MCF 10A (cell line): ENCODE measurements at regions of chr17 and their contacts with region 1.

Region 1: DNA sequence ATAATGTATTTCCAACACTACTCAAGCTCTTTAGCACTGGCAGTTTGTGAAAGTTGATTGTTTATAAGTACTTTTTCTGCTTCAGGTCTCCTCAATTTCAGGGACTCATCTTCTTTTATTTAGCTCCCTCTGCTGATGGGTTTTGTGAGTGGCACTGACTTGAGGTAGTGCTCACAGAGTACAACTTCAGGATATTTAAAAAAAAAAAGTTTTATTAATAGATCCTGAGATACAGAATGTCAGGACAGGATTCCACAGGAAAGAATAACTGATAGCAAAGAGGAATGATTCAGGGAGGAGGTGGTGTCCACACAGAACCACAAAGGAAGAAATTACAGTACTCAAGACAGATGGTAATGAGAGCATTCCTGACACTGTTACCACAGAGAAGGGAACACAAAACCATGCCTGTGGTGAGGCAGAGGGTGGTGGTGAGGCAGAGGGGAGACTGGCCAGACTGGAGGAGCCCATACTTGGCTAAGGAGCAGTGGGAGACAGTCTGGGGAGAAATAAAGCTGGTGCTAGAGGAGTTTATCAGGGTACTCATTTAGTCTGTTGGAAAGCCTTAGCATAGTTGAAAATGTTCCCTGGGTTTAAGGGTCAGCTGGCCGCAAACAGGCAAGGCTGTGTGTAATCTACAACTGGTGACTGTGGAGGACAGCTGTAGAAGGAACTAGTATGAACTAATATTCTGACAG is 63.7 kb downstream of the SPAG9 start:
- DNase-seq: peak; percentile 63
- H3K4me3 Mint-ChIP-seq: no peak overlapping the region
- H3K27ac Mint-ChIP-seq: peak overlapping the region; percentile 21
- H3K4me1 Mint-ChIP-seq: peaks cover 16% of the 10 kb centered on the region
- H3K27me3 Mint-ChIP-seq: no peaks in the 10 kb centered on the region
- CTCF ChIP-seq: no peak

Region 2: DNA sequence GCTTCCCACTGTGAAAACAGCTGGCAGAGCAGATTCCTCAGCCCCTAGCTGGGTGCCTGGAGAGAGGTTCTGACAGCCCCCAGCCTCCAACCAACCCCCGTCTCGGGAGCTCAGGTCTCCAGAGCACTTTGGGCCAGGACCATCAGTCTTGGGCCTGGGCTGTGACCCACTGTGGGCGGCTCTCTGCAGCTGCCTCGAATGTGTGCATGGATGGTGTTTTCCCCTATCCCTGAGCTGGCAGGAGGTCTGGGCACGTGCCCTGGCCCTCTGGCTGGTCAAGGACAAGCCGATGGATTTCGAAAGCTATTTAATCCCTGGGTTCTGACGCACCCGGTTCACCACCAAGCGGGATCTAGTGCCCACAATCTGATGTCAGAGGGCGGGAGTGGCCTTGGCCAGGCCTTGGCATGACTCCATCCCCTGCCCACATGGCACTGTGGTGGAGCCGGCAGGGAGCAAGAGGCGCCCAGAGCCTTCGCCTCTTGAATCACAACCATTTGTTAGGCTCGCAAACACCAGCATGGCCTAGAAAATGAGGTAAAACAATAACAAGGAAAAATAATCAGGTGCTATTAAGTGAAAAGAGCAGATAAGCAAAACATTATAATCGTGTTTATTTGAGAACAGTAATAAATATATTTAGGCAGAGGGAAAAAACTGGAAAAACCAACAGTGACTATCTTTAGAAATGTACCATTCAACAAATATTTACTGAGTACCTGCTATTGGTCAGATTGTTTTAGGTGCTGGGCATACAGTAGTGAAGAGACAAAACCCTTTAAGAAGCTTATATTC is 121.6 kb before region 1 on chr17:
- CTCF ChIA-PET with region 1: no interaction called
- POLR2A ChIA-PET with region 1: no interaction called
- intact Hi-C with region 1: no loop called
- DNase-seq: peak; percentile 99
- H3K4me3 Mint-ChIP-seq: peak overlapping the region; percentile 62
- H3K27ac Mint-ChIP-seq: peak overlapping the region; percentile 93
- H3K4me1 Mint-ChIP-seq: peaks cover 38% of the 10 kb centered on the region
- H3K27me3 Mint-ChIP-seq: no peaks in the 10 kb centered on the region
- CTCF ChIP-seq: no peak

Region 3: GRCh38 chr17:51000835-51001638 is 55.9 kb before region 1 on chr17:
- CTCF ChIA-PET with region 1: interaction called, 52 read pairs
- POLR2A ChIA-PET with region 1: interaction called, 5 read pairs
- intact Hi-C with region 1: loop called (anchors 1 kb)
- DNase-seq: peak; percentile 69
- H3K4me3 Mint-ChIP-seq: no peak overlapping the region
- H3K27ac Mint-ChIP-seq: no peak overlapping the region
- H3K4me1 Mint-ChIP-seq: no peaks in the 10 kb centered on the region
- H3K27me3 Mint-ChIP-seq: no peaks in the 10 kb centered on the region
- CTCF ChIP-seq: peak; percentile 55

Region 4: DNA sequence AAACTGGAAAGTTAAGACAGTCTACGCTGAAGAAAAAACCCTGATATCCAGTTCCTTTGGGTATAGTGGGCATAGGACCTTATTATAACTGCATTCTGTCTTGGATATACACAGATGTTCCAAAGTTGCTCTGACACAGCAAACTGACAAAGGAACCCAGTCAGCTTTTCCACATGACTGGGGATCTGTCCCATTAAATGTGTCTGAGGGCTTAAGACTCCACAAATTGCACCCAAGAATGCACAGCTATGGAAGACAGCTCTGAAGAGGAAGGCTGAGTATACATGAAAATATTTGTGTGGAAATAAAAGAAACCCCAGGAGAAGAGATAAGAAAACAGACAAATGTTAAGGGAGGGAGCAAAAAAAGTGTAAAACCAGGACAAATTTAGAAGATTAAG is 50.4 kb before region 1 on chr17:
- CTCF ChIA-PET with region 1: interaction called, 52 read pairs
- POLR2A ChIA-PET with region 1: interaction called, 5 read pairs
- intact Hi-C with region 1: loop called (anchors 1 kb)
- DNase-seq: no peak
- H3K4me3 Mint-ChIP-seq: no peak overlapping the region
- H3K27ac Mint-ChIP-seq: no peak overlapping the region
- H3K4me1 Mint-ChIP-seq: no peaks in the 10 kb centered on the region
- H3K27me3 Mint-ChIP-seq: no peaks in the 10 kb centered on the region
- CTCF ChIP-seq: no peak

Region 5: GRCh38 chr17:51035431-51035830 is 21.5 kb before region 1 on chr17:
- CTCF ChIA-PET with region 1: interaction called, 16 read pairs
- POLR2A ChIA-PET with region 1: no interaction called
- intact Hi-C with region 1: no loop called
- DNase-seq: no peak
- H3K4me3 Mint-ChIP-seq: no peak overlapping the region
- H3K27ac Mint-ChIP-seq: no peak overlapping the region
- H3K4me1 Mint-ChIP-seq: no peaks in the 10 kb centered on the region
- H3K27me3 Mint-ChIP-seq: no peaks in the 10 kb centered on the region
- CTCF ChIP-seq: no peak

Region 6: DNA sequence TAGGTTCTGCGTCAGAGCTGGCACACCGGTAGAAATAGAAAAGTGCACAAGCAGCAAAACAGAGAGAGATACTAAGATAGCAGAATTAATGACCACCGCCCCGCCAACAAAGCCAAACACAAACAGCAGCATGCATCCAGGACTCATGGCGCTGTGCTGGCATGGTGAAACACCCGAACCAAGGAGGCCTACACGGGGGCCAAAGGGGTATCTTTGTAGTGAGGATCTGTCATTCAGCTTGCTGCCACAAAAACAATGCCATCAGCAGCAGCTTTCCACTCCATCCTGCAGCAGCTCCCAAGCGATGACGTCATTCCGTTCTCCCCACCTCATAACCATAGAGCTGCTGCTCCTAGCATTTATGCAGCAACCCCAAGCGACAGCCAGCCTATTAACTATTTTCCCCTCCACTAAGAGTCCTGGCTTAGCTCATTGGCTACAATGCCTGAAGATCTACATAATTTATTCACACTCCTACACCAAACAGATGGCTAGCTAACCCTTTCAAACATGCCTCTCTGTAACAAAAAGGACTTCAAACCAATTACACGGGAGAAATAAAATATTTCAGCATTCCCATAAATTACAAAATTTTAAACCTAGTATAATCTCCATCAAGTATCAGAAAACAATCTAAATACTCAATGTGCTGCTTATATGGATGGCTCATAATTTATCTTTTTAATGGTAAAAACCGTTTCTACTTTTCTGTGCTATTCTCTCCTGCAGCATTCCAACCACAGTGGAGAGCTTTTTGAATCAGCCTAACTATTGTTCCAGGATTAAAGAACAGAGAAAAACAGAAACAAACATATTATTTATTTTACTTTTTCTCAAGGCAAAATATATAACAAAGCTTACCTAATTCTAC is 10.2 kb before region 1 on chr17:
- CTCF ChIA-PET with region 1: interaction called, 22 read pairs
- POLR2A ChIA-PET with region 1: interaction called, 16 read pairs
- intact Hi-C with region 1: no loop called
- DNase-seq: no peak
- H3K4me3 Mint-ChIP-seq: no peak overlapping the region
- H3K27ac Mint-ChIP-seq: no peak overlapping the region
- H3K4me1 Mint-ChIP-seq: peaks cover 4% of the 10 kb centered on the region
- H3K27me3 Mint-ChIP-seq: no peaks in the 10 kb centered on the region
- CTCF ChIP-seq: no peak

Region 7: DNA sequence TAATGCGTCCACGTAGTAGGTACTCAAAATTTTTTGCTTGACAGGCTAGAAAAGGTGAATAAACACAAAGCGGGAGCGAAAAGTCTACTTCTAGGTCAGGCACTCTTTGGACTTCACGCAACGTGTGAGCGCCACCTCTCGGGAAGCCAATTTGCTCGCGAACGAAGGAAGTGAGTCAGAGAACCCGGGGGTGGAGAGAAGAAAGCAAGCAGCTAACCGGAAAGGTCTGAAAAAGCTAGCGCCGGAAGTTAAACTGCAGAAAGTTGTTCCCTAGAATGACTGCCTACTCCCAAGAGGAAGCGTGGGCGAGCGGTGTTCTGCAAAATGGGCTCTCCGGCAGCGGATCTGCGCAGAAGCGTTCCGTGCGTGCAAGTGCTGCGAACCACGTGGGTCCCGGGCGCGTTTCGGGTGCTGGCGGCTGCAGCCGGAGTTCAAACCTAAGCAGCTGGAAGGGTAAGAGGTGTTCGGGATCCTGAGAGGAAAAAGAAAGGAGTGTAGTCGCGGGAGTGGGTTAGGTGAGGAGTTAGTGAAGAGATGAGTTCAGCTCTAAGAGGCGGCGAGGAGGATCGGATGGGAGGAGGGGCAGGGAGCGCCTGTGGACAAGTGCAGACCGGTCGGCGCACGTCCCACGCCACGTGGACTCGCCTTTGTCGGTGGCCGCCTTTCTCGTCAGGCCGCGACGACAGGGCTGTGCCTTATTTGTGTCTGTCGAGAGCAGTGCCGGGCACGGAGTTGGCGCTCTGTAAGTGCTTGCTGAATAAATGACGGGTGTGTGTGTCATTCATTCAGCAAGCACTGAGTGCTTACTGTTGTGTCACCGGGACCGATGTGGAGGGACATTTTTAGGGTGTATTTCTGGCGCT is 96.5 kb after region 1 on chr17 and contains the start of gene NME1:
- CTCF ChIA-PET with region 1: interaction called, 9 read pairs
- POLR2A ChIA-PET with region 1: interaction called, 6 read pairs
- intact Hi-C with region 1: loop called (anchors 2 kb)
- DNase-seq: peak; percentile 99
- H3K4me3 Mint-ChIP-seq: no peak within 1 kb of the TSS
- H3K27ac Mint-ChIP-seq: no peak within 1 kb of the TSS
- H3K4me1 Mint-ChIP-seq: no peaks in the 10 kb centered on the region
- H3K27me3 Mint-ChIP-seq: no peaks in the 10 kb centered on the region
- CTCF ChIP-seq: peak; percentile 70
- total RNA-seq, gene NME1: 268 and 324 TPM in 2 replicates